Ascending aorta (tissue), 2 donors: ENCODE measurements at regions of chr6 and their contacts with region 1.

Region 1: DNA sequence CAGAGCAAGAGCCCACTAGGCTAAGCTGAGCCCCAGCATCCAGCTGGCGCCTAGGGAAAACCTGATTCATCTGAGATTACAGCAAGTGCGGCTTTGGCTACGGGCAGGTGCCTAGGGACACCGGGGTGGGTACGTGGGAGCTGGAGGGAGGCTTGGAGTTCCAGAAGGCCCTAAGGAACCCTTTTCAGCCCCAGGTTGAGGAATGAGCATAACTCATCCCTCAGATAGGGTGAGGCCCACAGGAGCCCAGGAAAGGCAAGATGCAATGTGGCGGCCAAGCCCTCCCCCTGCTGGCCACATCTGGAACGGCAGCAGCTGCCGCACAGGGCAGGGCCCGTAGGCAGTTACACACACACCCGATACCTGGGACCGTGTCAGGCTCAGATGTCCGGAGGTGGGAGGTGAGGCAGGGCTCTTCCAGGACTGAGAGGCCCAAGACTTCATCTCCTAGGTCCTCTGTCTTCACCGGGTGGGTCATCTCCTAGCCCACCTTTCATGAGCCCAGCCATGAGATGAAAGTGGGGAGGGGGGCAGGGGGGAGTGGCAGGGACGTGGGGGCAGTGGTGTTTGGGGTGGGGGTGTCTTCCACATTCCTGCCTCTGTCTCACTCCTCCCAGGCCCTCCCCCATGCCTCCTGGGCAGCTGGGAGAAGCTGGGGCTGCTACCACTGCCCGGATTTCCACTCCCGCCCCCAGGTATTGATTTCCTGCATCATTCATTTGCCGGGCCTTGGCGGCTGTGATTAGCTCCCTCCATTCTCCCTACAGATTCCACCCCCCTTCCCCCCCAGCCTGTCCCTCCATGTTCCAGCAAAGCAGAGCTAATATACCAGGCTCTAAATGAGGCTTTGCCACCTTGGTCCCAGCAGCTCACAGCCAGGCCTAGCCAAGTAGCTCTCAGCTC is 5.5 kb downstream of the MDGA1 start:
- DNase-seq: peak in 1 of 2 donors; percentile 85
- H3K4me3 ChIP-seq: no peak overlapping the region
- H3K27ac ChIP-seq: peak overlapping the region in 1 of 2 donors; percentile 39
- H3K4me1 ChIP-seq: peaks cover 9 to 30% of the 10 kb centered on the region in 2 donors
- H3K27me3 ChIP-seq: no peaks in the 10 kb centered on the region
- CTCF ChIP-seq: peak; percentile 96 to 99 (median 97)

Region 2: GRCh38 chr6:37324131-37325033 is 367.8 kb before region 1 on chr6:
- intact Hi-C with region 1: loop called (anchors 5 kb)
- DNase-seq: no peak
- H3K4me3 ChIP-seq: no peak overlapping the region
- H3K27ac ChIP-seq: peak overlapping the region; percentile 38 to 77
- H3K4me1 ChIP-seq: peaks cover 0 to 20% of the 10 kb centered on the region in 2 donors
- H3K27me3 ChIP-seq: no peaks in the 10 kb centered on the region
- CTCF ChIP-seq: no peak

Region 3: GRCh38 chr6:37365762-37366161 is 326.4 kb before region 1 on chr6:
- intact Hi-C with region 1: loop called (anchors 5 kb)
- DNase-seq: no peak
- H3K4me3 ChIP-seq: no peak overlapping the region
- H3K27ac ChIP-seq: peak overlapping the region; percentile 40 to 47
- H3K4me1 ChIP-seq: peaks cover 7 to 15% of the 10 kb centered on the region in 2 donors
- H3K27me3 ChIP-seq: no peaks in the 10 kb centered on the region
- CTCF ChIP-seq: peak in 2 of 3 experiments; percentile 35 to 58

Region 4: DNA sequence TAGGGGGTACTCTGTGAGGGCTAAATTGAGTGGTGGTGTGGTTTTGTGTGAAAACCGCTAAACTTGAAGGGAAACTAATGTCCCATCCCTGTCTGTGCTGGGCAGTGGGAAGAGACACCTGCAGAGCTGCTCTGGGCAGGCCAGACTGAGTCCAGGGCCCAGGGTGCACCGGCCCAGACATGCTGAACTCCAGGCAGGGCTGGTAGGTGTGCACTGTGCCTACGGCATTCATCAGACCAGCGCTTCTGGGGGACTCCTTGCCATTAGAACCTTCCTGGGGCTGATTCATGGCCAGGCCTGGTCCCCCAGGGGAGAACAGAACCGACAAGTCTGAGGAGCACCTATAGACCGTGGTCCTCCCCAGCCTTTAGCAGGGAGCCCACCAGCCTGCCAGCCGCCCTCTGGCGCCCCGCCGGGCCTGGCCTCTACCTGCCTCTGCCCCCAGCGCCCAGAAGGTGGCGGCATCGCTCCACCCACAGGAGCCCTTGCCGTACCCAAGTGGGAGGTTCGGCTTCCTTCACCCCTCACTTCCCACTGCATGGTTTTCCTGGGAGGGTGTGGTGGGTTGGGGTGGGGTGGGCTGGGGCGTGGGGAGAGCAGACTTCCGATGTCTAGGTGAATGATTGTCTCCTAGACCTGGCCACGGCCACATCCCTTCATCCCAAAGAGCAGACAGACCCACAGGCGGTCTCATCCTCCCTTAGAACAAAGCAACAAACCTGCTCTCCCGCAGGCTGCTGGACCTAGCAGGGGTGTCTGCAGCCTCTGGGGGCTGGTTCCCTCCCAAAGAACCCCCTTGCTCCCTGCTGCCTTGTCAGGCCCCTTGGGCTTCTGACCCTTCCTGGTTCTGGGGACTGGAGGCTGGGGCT is 208.0 kb before region 1 on chr6:
- intact Hi-C with region 1: loop called (anchors 1 kb)
- DNase-seq: no peak
- H3K4me3 ChIP-seq: no peak overlapping the region
- H3K27ac ChIP-seq: no peak overlapping the region
- H3K4me1 ChIP-seq: no peaks in the 10 kb centered on the region
- H3K27me3 ChIP-seq: no peaks in the 10 kb centered on the region
- CTCF ChIP-seq: peak; percentile 63 to 80 (median 67)

Region 5: DNA sequence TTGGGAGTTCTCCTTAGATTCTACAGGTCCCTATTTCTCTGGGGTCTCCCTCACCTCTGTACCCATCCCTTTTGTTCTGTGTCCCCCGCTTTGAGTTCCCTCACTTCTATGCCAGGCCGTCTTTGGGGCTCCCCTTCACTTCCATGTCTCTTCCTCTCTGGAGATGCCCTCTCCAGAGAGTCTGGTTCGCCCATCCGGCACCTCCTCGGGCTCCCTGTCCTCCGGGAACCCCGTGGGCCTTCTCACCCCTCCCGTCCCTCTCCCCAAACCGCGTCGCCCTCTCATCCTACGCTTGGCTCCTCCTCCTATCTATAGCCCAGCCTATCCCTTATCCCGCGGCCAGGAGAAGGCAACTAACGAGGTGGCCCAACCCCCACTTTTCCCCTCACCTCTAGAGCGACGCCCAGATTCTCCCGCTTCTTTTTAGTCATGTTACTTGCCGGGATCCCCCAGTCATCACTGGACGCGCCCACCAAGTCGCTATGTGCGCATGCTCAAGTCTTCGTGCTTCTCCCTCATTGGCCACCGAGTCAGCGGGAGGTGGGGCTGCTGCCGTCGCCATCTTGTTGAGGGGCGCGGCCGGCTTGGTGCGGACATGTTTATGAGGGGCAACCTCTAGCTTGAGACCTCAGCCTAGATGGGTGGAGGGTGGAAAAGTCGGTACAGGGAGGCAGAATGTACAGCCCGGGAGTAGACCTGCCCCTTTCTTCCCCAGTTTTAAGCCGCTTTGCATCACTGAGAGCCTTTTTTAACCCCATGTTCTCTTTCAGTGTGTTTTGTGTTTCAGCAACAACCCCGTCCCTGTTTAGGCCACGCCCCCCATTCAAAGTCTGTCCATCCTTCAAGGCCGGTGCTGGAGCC is 192.5 kb before region 1 on chr6 and contains the start of gene CCDC167:
- intact Hi-C with region 1: loop called (anchors 5 kb)
- DNase-seq: peak; percentile 85 to 98
- H3K4me3 ChIP-seq: peak within 1 kb of the TSS; percentile 82 to 91
- H3K27ac ChIP-seq: peak within 1 kb of the TSS in 1 of 2 donors; percentile 23
- H3K4me1 ChIP-seq: no peaks in the 10 kb centered on the region
- H3K27me3 ChIP-seq: no peaks in the 10 kb centered on the region
- CTCF ChIP-seq: no peak
- total RNA-seq, gene CCDC167: 28.4 TPM